T-cell (primary cell): ENCODE measurements at regions of chr11 and their contacts with region 1.

Region 1: DNA sequence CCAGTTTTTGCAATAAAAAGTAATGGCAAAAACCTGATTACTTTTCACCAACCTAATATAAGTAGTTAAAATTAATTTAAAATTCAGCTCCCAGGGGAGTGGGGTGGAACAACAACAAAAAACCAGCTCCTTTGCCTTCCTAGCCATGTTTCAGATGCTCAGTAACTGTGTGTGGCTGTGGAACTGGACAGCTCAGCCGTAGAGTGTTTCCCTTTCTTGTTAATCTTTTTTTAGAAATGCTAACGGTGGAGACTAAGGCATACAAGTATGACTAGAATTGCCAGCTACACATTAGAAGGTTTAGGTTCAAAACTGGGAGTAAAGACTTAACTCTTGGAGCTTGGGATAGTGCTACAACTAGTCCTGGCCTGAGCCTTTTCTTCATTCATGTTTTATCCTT is 45.0 kb downstream of the PPP6R3 start:
- DNase-seq: no peak
- ATAC-seq: no peak
- H3K4me3 ChIP-seq: no peak overlapping the region
- H3K4me3 Mint-ChIP-seq: no peak overlapping the region
- H3K27ac ChIP-seq: no peak overlapping the region
- H3K27ac Mint-ChIP-seq: no peak overlapping the region
- H3K4me1 ChIP-seq: peaks cover 11 to 43% of the 10 kb centered on the region in 2 experiments
- H3K4me1 Mint-ChIP-seq: peaks cover 82 to 87% (median 86%) of the 10 kb centered on the region in 3 donors
- H3K27me3 ChIP-seq: no peaks in the 10 kb centered on the region
- H3K27me3 Mint-ChIP-seq: no peaks in the 10 kb centered on the region

Region 2: DNA sequence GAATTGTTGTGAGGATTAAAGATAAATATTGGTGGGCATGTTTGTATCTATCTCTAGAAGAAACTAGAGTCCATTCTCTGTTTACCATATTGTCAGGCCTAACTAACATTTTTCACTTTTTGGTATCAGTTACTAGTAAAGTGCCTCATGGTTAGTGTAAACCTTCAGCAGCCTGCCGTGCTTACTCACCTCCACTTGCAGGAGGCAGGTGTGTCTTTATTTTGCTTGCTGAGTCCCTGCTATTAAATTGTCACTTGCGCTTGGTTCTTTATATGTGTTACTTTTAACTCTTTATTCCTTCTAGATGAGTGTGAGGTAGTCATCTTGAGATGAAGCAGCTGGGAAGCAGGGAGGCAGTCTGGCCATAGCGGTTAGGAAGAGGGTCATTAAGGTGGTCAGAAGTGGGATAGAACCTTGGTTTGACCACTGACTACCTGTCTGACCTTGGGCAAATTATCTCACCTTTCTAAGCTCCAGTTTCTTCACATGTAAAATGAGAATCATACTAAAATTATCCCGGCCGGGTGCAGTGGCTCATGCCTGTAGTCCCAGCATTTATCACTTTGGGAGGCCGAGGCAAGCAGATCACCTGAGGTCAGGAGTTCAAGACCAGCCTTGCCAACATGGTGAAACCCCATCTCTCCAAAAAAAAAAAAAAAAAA is 23.9 kb before region 1 on chr11:
- CTCF ChIA-PET with region 1: interaction called, 3 to 5 read pairs
- POLR2A ChIA-PET with region 1: interaction called in 1 of 2 experiments, 14 read pairs
- DNase-seq: no peak
- ATAC-seq: no peak
- H3K4me3 ChIP-seq: no peak overlapping the region
- H3K4me3 Mint-ChIP-seq: peak overlapping the region in 1 of 3 donors; percentile 59
- H3K27ac ChIP-seq: no peak overlapping the region
- H3K27ac Mint-ChIP-seq: no peak overlapping the region
- H3K4me1 ChIP-seq: peaks cover 18 to 28% of the 10 kb centered on the region in 2 experiments
- H3K4me1 Mint-ChIP-seq: peaks cover 84 to 88% (median 85%) of the 10 kb centered on the region in 3 donors
- H3K27me3 ChIP-seq: no peaks in the 10 kb centered on the region
- H3K27me3 Mint-ChIP-seq: no peaks in the 10 kb centered on the region